ENCODE measurements at regions of chr18 and their contacts with region 1.

Region 1: GRCh38 chr18:23032030-23032582 is 99.0 kb downstream of the RBBP8 start:
- DNase-seq: no peak
- H3K4me3 ChIP-seq: no peak overlapping the region
- H3K27ac ChIP-seq: no peak overlapping the region
- H3K4me1 ChIP-seq: peaks cover 0 to 10% of the 10 kb centered on the region in 2 donors
- H3K27me3 ChIP-seq: no peaks in the 10 kb centered on the region
- CTCF ChIP-seq: no peak

Region 2: GRCh38 chr18:22930089-22930713 is 101.9 kb before region 1 on chr18:
- intact Hi-C with region 1: no loop called
- DNase-seq: peak in 1 of 2 donors; percentile 87
- H3K4me3 ChIP-seq: no peak overlapping the region
- H3K27ac ChIP-seq: no peak overlapping the region
- H3K4me1 ChIP-seq: peaks cover 0 to 4% of the 10 kb centered on the region in 2 donors
- H3K27me3 ChIP-seq: no peaks in the 10 kb centered on the region
- CTCF ChIP-seq: peak; percentile 42 to 71 (median 69)

Region 3: GRCh38 chr18:22999212-22999611 is 32.9 kb before region 1 on chr18:
- intact Hi-C with region 1: no loop called
- DNase-seq: no peak
- H3K4me3 ChIP-seq: no peak overlapping the region
- H3K27ac ChIP-seq: no peak overlapping the region
- H3K4me1 ChIP-seq: no peaks in the 10 kb centered on the region
- H3K27me3 ChIP-seq: no peaks in the 10 kb centered on the region
- CTCF ChIP-seq: no peak

Region 4: GRCh38 chr18:23131693-23132319 is 99.7 kb after region 1 on chr18:
- intact Hi-C with region 1: loop called (anchors 2 kb)
- DNase-seq: peak in 1 of 2 donors; percentile 85
- H3K4me3 ChIP-seq: no peak overlapping the region
- H3K27ac ChIP-seq: no peak overlapping the region
- H3K4me1 ChIP-seq: peaks cover 0 to 3% of the 10 kb centered on the region in 2 donors
- H3K27me3 ChIP-seq: no peaks in the 10 kb centered on the region
- CTCF ChIP-seq: peak; percentile 74 to 82 (median 75)

Region 5: GRCh38 chr18:23259701-23260582 is 227.8 kb after region 1 on chr18:
- intact Hi-C with region 1: loop called (anchors 10 kb)
- DNase-seq: peak; percentile 46 to 89
- H3K4me3 ChIP-seq: peak overlapping the region; percentile 39 to 55
- H3K27ac ChIP-seq: peak overlapping the region; percentile 95 to 97
- H3K4me1 ChIP-seq: peaks cover 18 to 30% of the 10 kb centered on the region in 2 donors
- H3K27me3 ChIP-seq: no peaks in the 10 kb centered on the region
- CTCF ChIP-seq: no peak

Region 6: GRCh38 chr18:23406271-23406787 is 374.2 kb after region 1 on chr18:
- intact Hi-C with region 1: loop called (anchors 1 kb)
- DNase-seq: no peak
- H3K4me3 ChIP-seq: no peak overlapping the region
- H3K27ac ChIP-seq: no peak overlapping the region
- H3K4me1 ChIP-seq: no peaks in the 10 kb centered on the region
- H3K27me3 ChIP-seq: no peaks in the 10 kb centered on the region
- CTCF ChIP-seq: no peak